Heart left ventricle (tissue), 16 donors: ENCODE measurements at regions of chr22 and their contacts with region 1.

Region 1: GRCh38 chr22:38051900-38052862 is 5.0 kb upstream of the PICK1 start:
- DNase-seq: peak; percentile 71 to 89 (median 76)
- ATAC-seq: peak in 3 of 4 donors; percentile 74 to 79 (median 75)
- H3K4me3 ChIP-seq: no peak overlapping the region
- H3K27ac ChIP-seq: peak overlapping the region in 1 of 12 donors; percentile 24
- H3K4me1 ChIP-seq: peaks cover 0 to 16% (median 7%) of the 10 kb centered on the region in 12 donors
- H3K27me3 ChIP-seq: no peaks in the 10 kb centered on the region
- CTCF ChIP-seq: peak; percentile 73 to 91 (median 87)
- POLR2A ChIP-seq: no peak

Region 2: GRCh38 chr22:38080850-38081635 is 28.9 kb after region 1 on chr22:
- intact Hi-C with region 1: no loop called
- DNase-seq: peak in 4 of 5 donors; percentile 42 to 73 (median 57)
- ATAC-seq: peak in 3 of 4 donors; percentile 55 to 70 (median 58)
- H3K4me3 ChIP-seq: peak overlapping the region; percentile 5 to 52 (median 44)
- H3K27ac ChIP-seq: peak overlapping the region in 2 of 12 donors; percentile 12 to 13
- H3K4me1 ChIP-seq: peaks cover 5 to 23% (median 15%) of the 10 kb centered on the region in 12 donors
- H3K27me3 ChIP-seq: peaks cover 0 to 35% (median 9%) of the 10 kb centered on the region in 9 donors
- CTCF ChIP-seq: peak in 1 of 12 donors; percentile 7
- POLR2A ChIP-seq: peak in 1 of 2 donors; percentile 22

Region 3: GRCh38 chr22:38230108-38230825 is 178.1 kb after region 1 on chr22:
- intact Hi-C with region 1: loop called in 1 of 10 experiments (anchors 10 kb)
- DNase-seq: peak in 1 of 5 donors; percentile 50
- ATAC-seq: peak in 2 of 4 donors; percentile 16 to 22
- H3K4me3 ChIP-seq: no peak overlapping the region
- H3K27ac ChIP-seq: peak overlapping the region in 10 of 12 donors; percentile 8 to 70 (median 56)
- H3K4me1 ChIP-seq: peaks cover 0 to 51% (median 22%) of the 10 kb centered on the region in 12 donors
- H3K27me3 ChIP-seq: no peaks in the 10 kb centered on the region
- CTCF ChIP-seq: peak in 10 of 12 donors; percentile 25 to 53 (median 41)
- POLR2A ChIP-seq: no peak

Region 4: DNA sequence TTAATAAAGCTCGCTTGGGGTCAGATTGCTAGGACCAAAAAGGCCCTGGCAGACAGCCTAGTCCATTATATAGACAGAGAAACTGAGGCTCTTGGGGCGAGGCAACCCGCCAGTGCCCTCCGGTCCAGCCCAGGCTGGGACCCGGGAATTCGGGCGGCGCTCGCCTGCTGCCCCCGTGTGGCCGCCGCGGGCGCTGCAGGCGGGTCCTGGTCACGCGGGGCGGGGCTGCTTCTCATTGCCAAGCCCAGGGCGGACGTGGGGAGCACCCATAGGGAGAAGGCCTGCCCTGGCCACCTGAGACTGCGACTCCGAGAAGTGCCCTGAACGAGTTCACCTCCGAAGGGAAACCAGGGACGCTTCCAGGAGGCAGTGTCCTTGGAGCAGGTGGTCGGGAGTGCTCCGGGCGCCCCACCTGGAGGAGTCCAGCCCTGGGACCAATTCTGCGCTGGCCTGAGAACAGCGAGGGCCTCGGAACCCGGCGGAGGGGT is 301.0 kb after region 1 on chr22:
- intact Hi-C with region 1: loop called in 7 of 10 experiments (anchors 2 to 10 kb)
- DNase-seq: peak; percentile 63 to 88 (median 69)
- ATAC-seq: peak in 3 of 4 donors; percentile 65 to 81 (median 81)
- H3K4me3 ChIP-seq: no peak overlapping the region
- H3K27ac ChIP-seq: peak overlapping the region in 4 of 12 donors; percentile 21 to 60 (median 24)
- H3K4me1 ChIP-seq: peaks cover 0 to 11% (median 4%) of the 10 kb centered on the region in 12 donors
- H3K27me3 ChIP-seq: no peaks in the 10 kb centered on the region
- CTCF ChIP-seq: peak; percentile 97 to 100 (median 99)
- POLR2A ChIP-seq: no peak

Region 5: GRCh38 chr22:38569972-38570778 is 518.0 kb after region 1 on chr22 and contains the start of gene DMC1:
- intact Hi-C with region 1: loop called (anchors 2 to 10 kb)
- DNase-seq: peak; percentile 94 to 96 (median 95)
- ATAC-seq: peak; percentile 90 to 98 (median 98)
- H3K4me3 ChIP-seq: peak within 1 kb of the TSS; percentile 45 to 82 (median 68)
- H3K27ac ChIP-seq: peak within 1 kb of the TSS in 11 of 12 donors; percentile 62 to 94 (median 87)
- H3K4me1 ChIP-seq: peaks cover 0 to 38% (median 15%) of the 10 kb centered on the region in 12 donors
- H3K27me3 ChIP-seq: peaks cover 0 to 5% (median 0%) of the 10 kb centered on the region in 9 donors
- CTCF ChIP-seq: no peak
- POLR2A ChIP-seq: peak in 1 of 2 donors; percentile 46
- total RNA-seq, gene DMC1: 0.16 to 2.4 (median 1.1) TPM

Region 6: DNA sequence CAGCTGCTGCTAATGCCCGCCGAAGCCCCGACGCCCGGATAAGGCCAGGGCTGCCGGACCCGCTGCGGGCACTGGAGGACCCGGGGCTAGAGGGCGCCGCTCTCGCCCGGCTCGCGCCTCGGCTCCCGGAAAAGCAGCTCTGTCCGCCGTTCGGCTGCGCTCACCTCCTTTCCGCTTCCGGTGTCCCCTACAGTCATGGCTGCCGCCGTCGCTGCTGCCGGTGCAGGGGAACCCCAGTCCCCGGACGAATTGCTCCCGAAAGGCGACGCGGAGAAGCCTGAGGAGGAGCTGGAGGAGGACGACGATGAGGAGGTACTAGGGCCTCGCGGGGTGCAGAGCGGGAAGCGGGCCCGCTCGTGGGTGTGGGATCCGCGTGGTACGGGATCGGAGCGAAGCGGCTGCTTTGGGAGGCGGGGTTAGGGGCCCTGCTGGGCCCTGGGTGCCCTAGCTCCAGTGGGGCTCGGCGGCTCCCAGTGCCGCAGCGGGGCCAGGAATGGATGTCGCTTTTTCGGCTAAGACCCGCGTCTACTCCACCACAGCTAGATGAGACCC is 629.7 kb after region 1 on chr22 and contains the start of gene TOMM22:
- intact Hi-C with region 1: loop called in 2 of 10 experiments (anchors 5 to 10 kb)
- DNase-seq: peak; percentile 88 to 94 (median 92)
- ATAC-seq: peak; percentile 96 to 99 (median 99)
- H3K4me3 ChIP-seq: peak within 1 kb of the TSS; percentile 72 to 100 (median 92)
- H3K27ac ChIP-seq: peak within 1 kb of the TSS in 11 of 12 donors; percentile 53 to 88 (median 79)
- H3K4me1 ChIP-seq: peaks cover 0 to 17% (median 8%) of the 10 kb centered on the region in 12 donors
- H3K27me3 ChIP-seq: no peaks in the 10 kb centered on the region
- CTCF ChIP-seq: peak; percentile 24 to 91 (median 64)
- POLR2A ChIP-seq: peak in 1 of 2 donors; percentile 47
- total RNA-seq, gene TOMM22: 37.1 to 82.1 (median 71.6) TPM